Right ventricle myocardium superior (tissue), 1 donor: ENCODE measurements at regions of chr1 and their contacts with region 1.

Region 1: DNA sequence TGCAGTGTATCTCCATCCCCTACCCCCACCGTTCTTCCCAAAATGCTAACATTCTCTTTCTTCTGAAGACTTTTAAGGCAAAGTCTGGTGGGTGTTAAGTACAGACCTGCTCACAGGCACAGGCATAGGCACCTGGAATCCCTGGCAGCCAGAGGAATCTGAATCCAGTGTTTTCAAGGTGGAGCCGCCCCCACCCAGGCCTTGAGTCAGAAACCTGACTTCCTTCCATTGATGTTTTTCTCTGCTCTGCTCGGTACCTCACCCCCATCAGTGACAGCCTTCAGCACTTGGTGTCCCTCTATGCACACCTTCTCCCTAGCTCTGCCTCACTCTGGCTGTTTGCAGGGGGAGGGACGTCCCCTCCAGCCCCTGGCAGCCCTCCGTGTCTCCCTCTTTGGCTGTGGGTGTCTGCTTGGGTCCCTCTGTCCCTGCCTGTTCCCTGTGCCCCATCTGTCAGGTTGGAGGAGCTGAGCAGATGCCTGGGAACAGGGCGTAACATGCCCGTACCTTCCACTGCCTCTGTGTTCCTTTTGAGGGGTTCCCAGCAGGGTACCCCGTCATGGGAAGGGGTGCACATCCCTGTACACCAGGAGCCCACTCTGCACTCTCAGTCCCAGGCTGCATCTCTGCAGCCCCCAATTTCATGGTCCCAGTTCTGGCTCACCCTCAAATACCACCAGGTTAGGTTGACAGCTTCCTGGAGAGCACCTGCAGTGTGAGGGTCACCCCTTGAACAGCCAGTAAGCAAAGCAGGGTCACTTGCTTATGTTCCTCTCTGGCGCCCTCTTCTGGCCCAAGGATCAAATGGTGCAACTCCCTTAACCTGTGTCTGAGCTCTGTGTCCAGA is 6.7 kb downstream of the NCDN start:
- DNase-seq: peak; percentile 76
- ATAC-seq: peak; percentile 53

Region 2: DNA sequence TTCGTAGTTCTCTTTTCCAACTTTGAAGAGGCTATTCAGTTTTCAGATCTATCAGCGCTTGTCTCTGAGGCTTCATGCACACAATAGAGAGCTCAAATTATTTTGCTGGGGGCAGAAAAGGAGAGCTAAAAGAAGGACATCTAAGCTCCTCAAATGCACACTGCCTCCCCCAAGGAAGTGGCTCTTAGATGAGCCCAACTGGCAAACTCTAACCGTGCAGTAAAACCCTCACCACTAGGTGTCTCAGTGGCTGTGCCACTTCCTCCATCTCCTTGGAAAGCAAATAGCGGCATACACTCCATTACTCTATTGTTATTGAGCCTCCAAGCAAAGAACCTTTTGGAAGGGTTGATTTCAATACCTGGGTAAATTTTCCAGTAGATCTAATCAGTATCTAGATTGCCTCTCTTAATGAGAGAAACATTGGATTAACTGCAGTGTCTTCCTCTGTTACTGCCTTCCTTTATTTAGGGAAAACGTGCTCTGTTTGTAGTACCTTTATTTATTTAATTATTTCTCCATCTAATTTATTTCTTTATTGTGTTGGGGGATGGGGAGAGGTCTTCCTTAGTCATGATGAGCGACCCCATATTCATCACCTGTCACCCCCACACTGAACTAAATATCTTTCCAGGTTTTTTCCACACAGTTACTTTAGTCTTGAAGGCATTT is 362.1 kb before region 1 on chr1:
- intact Hi-C with region 1: loop called (anchors 10 kb)
- DNase-seq: peak; percentile 55
- ATAC-seq: peak; percentile 97

Region 3: DNA sequence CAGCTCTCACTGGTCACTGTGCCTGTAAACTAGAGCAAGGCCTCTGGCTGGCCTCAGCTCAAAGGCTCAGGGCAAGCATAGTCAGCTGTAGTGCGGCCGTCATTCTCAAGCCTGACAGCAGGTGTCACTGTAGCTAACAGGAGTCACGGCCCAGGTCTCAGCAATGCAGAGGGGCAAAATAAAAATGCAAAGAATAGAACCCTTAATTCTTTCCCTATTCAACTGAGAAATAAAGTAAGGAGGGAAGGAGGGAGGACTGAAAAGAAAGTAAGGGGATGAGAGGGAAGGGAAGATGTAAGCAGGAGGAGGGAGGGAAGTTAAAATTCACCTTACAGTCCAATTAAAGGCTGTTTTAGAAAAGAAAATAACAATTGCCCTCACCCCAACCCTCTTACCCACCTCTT is 113.1 kb before region 1 on chr1:
- intact Hi-C with region 1: loop called (anchors 5 kb)
- DNase-seq: peak; percentile 91
- ATAC-seq: peak; percentile 90

Region 4: GRCh38 chr1:35769759-35770446 is 205.6 kb after region 1 on chr1 and contains the start of gene CLSPN:
- intact Hi-C with region 1: loop called (anchors 10 kb)
- DNase-seq: peak; percentile 95
- ATAC-seq: peak; percentile 99
- total RNA-seq, gene CLSPN: 1.1 TPM